GM10248 (cell line): ENCODE measurements at regions of chr9 and their contacts with region 1.

Region 1: DNA sequence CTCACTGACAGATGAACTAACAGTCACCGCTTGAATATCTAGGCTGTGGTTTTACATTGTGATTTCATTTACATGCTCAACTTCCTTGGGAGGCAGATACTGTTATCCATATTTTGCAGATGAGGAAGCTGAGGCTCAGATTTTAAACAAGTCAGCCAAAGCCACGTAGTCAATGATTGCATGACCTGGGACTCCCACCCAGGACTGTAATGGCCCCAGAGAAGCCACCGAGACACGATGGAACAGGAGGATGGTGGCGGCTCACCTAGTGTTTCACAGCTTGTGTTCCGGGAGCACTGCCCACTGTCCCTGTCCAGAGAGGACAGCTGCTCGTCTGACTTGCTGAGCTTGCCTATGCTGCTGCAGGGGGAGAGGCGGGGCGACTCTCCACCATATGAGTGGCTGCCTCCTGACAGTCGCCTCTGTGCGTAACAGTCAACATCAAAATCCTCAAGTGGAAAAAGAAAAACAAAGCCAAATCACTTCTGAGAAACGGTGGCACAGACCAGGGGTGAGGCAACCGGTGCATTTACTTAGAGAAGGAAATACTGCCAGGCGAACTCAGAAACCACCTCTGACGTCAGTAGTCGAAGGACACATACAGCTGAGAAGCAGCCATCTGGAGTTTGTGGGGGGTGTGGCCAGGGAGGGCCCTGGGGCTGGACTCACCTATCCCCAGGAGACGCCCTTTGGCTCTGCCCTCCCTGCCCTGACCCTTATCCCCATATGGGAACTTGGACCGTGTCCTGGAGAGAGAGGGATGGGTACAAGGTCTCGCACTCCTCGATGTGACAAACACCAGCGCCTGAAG is 82.5 kb downstream of the PRRT1B start:
- DNase-seq: no peak
- CTCF ChIP-seq: no peak

Region 2: GRCh38 chr9:131645078-131645776 is 17.4 kb after region 1 on chr9:
- CTCF ChIA-PET with region 1: interaction called, 18 read pairs
- POLR2A ChIA-PET with region 1: interaction called, 4 read pairs
- DNase-seq: no peak
- CTCF ChIP-seq: no peak